ENCODE measurements at regions of chr17 and their contacts with region 1.

Region 1: DNA sequence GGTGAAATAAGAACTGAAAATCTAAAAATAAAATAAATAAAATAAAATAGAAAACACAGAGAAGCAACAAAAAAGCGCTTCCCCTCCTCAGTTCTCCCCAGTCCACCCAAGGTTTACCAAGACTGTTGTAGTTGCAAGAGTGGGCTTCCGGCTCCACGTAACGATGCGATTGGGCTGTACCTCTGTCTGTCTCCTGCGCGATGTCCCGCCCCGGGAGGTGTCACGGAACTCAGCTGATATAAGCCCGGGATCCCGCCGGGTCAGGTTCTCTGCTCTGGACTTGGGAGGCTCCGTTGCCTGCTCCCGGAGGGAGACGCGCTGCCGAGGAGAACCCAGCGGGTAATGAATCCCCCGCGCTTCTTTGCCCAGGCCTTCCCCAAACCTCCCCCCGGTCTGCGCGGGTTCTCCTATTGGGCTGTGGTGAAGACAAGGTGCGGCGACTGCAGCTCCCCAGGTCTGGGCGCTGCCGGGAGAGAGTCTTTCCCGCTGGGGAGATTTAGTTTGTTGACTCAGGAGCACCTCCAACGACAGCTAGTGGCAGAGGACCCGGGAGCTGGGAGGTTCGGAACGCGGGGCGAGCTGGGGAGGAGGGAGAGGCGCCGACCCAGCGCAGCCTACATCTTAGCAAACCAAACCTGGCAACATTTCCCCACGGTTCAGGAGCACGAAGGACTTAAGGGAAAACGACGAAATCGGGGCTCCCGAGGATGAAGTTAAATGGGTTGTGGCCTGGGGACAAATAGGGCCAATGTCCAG is at the start of gene SLFN5:
- DNase-seq: peak; percentile 95
- ATAC-seq: peak; percentile 95 to 97
- total RNA-seq, gene SLFN5: 15.8 to 27.4 TPM

Region 2: DNA sequence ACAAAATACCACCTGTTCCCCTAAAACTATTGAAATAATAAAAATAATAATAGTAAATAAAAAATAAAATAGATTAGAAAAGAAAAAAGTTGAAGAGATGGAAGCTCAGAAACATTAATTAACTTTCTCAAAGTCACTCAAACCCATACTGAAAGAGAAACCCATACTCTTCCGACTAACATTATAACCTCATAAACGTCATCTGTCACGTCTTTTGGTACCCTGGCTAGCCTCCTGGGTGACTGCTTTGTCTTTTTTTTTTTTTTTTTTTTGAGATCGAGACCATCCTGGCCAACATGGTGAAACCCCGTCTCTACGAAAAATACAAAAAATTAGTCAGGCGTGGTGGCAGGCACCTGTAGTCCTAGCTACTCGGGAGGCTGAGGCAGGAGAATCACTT is 286.9 kb after region 1 on chr17:
- intact Hi-C with region 1: loop called in 1 of 2 experiments (anchors 5 kb)
- DNase-seq: no peak
- ATAC-seq: no peak